ENCODE measurements at regions of chr12 and their contacts with region 1.

Region 1: GRCh38 chr12:49069507-49070346 is at the start of gene RHEBL1:
- DNase-seq: peak; percentile 99
- ATAC-seq: peak; percentile 100
- H3K4me3 ChIP-seq: peak within 1 kb of the TSS; percentile 70 to 76 (median 75)
- H3K27ac ChIP-seq: peak within 1 kb of the TSS; percentile 17 to 60 (median 48)
- H3K4me1 ChIP-seq: peaks cover 0 to 7% (median 2%) of the 10 kb centered on the region in 4 donors
- H3K27me3 ChIP-seq: no peaks in the 10 kb centered on the region
- CTCF ChIP-seq: peak in 2 of 4 donors; percentile 7
- POLR2A ChIP-seq: no peak
- total RNA-seq, gene RHEBL1: 0.17 to 0.60 (median 0.43) TPM in 5 of 6 experiments, not detected in the other

Region 2: GRCh38 chr12:49121047-49121696 is 51.4 kb after region 1 on chr12:
- intact Hi-C with region 1: loop called in 1 of 2 experiments (anchors 10 kb)
- DNase-seq: peak in 2 of 3 donors; percentile 29 to 61
- ATAC-seq: peak; percentile 97 to 99 (median 98)
- H3K4me3 ChIP-seq: no peak overlapping the region
- H3K27ac ChIP-seq: no peak overlapping the region
- H3K4me1 ChIP-seq: peaks cover 0 to 4% (median 0%) of the 10 kb centered on the region in 4 donors
- H3K27me3 ChIP-seq: no peaks in the 10 kb centered on the region
- CTCF ChIP-seq: peak; percentile 66 to 71 (median 69)
- POLR2A ChIP-seq: no peak

Measured in right lobe of liver (tissue), 6 donors.